AG04449 (cell line): ENCODE measurements at regions of chr1 and their contacts with region 1.

Region 1: GRCh38 chr1:172833954-172834353 is 175.1 kb downstream of the FASLG start:
- DNase-seq: no peak
- H3K4me3 ChIP-seq: no peak overlapping the region
- CTCF ChIP-seq: no peak

Region 2: GRCh38 chr1:172845371-172845770 is 11.4 kb after region 1 on chr1:
- CTCF ChIA-PET with region 1: interaction called, 11 read pairs
- POLR2A ChIA-PET with region 1: no interaction called
- DNase-seq: no peak
- H3K4me3 ChIP-seq: no peak overlapping the region
- CTCF ChIP-seq: no peak